Cardiac septum (tissue), 1 donor: ENCODE measurements at regions of chr1 and their contacts with region 1.

Region 1: GRCh38 chr1:36420836-36421664 is 23.3 kb upstream of the LSM10 start:
- DNase-seq: peak; percentile 95

Region 2: DNA sequence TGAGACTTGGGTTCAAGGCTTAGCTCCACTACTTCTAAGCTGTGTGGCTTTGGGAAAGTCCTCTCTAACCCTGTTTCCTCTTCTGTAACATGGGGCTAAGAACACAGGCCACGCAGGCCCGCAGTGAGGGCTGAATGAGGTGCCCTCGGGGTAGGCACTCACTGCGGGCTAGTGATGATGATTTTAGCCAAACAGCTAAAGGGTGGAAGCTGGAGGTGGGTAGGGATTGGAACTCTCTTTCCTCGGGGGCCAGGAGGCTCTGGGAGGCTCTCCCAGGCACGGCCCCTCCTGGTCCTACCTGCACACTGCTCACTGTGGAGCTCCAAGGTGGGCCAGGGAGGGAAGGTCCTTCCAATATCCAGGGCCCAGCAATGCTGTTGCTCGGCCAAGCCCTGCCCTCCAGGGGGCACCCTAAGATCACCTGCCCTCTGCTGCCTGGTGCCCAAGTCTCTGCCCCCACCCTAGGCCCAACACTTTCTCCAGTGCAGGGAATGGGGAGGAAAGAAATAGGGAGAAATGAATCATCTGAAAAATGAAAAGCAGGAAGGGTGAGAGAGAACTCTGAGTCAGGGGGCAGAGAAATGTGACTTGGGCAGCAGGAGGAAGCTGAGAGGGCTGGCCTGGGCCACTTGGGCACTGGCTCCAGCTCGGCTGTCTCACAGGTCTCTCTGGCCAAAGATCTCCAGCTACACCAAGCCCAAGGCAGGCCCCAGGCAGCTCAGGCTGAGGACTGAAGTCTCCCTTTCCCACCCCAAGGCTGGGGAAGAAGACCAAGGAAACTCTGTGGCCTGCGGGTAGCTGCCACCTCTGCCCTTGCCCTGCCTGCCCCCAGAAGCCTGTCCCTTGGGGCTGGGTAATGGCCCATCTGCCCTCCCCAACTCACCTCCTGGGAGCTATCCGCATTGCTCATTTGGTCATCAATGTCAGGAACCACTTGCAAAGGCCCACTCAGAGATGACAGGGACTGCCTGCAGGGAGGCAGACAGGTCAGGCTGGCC is 78.3 kb before region 1 on chr1:
- intact Hi-C with region 1: loop called (anchors 2 kb)
- DNase-seq: no peak

Region 3: DNA sequence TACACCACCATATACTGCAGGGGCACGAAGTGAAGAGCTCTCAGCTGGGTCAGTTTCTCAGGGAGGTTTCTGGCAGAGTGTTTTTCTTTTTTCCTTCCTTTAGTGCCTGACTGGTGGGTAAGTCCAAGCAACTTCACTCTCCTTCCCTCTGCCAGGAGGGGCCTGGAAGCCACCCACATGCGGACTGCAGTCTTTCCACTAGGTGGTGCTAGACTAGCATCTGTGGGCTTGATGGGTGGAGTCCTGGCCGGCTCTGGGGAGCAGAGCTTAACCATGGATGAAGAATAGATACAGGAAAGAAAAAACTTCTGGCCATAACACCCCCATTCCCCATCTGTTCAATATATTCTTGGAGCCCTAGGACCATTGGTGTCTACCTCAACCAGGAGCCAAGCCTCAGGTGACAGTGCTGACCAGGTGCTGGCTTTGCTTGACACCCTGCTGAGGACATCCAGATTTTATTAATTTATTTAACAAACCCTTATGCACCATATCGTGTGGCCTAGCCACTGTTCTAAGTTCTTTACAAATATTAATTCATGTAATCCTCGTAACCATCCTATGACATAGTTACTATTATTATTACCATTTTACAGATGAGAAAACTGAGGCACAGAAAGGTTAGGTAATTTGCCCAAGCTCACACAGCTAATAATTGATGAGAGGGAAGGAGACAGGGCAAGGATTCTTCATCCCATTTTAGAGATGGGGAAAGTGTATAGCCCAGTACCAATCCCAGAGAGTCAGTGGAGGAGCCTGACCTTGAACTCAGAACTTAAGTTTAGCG is 188.4 kb after region 1 on chr1:
- intact Hi-C with region 1: no loop called
- DNase-seq: no peak